ENCODE measurements at regions of chr16 and their contacts with region 1.

Region 1: DNA sequence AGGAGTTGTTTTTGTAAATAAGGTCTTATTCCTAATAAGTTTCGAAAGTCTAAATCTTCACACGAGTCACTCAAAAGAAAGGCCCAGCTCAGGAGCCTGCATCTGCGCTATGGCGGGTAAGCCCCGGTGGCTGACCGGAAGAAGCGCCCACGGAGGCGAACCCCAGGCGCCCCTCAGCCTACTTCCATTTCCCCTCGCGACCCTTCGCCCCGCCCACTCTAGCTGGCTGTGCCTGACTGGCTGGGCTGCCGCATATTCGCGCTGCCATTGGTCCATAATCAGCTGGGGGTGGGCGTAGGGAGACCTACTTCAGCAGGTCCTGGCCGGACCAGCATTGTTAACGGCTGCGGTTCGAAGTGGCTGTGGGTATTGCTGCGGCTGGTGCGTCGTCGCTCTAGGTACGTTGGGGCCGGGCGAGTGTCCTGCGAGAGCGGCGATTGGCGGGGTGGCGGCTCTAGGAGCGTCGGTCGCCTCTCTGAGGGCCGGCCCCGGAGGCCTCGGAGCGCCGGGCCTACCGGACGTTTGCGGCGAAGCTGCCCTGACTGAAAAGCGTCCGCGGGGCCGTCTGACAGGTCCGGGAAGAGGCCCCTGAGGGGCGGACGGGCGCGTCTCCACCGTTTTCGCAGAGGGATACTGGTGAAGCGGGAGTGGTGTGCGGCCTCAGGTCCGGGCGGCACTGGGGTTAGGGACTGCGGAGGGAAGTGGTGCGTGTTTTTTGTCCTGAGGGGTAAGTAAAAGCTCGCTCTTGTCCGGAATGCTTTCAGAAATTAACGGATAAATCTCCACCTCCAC is at the start of gene ATF7IP2:
- DNase-seq: peak; percentile 93
- ATAC-seq: peak; percentile 99
- H3K4me3 ChIP-seq: peak within 1 kb of the TSS; percentile 72 to 97 (median 93)
- H3K4me3 Mint-ChIP-seq: peak within 1 kb of the TSS; percentile 100
- H3K27ac ChIP-seq: peak within 1 kb of the TSS; percentile 72 to 86
- H3K27ac Mint-ChIP-seq: peak within 1 kb of the TSS; percentile 99
- H3K4me1 ChIP-seq: peaks cover 11 to 20% of the 10 kb centered on the region in 2 donors
- H3K4me1 Mint-ChIP-seq: peaks cover 45% of the 10 kb centered on the region
- H3K27me3 ChIP-seq: no peaks in the 10 kb centered on the region
- H3K27me3 Mint-ChIP-seq: no peaks in the 10 kb centered on the region
- CTCF ChIP-seq: no peak
- total RNA-seq, gene ATF7IP2: 63.7 and 67.5 TPM in 2 replicates

Region 2: GRCh38 chr16:10256784-10257641 is 128.9 kb before region 1 on chr16:
- CTCF ChIA-PET with region 1: interaction called, 5 read pairs
- POLR2A ChIA-PET with region 1: no interaction called
- intact Hi-C with region 1: loop called (anchors 5 kb)
- DNase-seq: peak; percentile 83
- ATAC-seq: peak; percentile 90
- H3K4me3 ChIP-seq: peak overlapping the region in 1 of 5 experiments; percentile 18
- H3K4me3 Mint-ChIP-seq: peak overlapping the region; percentile 42
- H3K27ac ChIP-seq: peak overlapping the region in 1 of 2 donors; percentile 56
- H3K27ac Mint-ChIP-seq: peak overlapping the region; percentile 70
- H3K4me1 ChIP-seq: peaks cover 31 to 49% of the 10 kb centered on the region in 2 donors
- H3K4me1 Mint-ChIP-seq: peaks cover 45% of the 10 kb centered on the region
- H3K27me3 ChIP-seq: no peaks in the 10 kb centered on the region
- H3K27me3 Mint-ChIP-seq: no peaks in the 10 kb centered on the region
- CTCF ChIP-seq: peak; percentile 87

Region 3: DNA sequence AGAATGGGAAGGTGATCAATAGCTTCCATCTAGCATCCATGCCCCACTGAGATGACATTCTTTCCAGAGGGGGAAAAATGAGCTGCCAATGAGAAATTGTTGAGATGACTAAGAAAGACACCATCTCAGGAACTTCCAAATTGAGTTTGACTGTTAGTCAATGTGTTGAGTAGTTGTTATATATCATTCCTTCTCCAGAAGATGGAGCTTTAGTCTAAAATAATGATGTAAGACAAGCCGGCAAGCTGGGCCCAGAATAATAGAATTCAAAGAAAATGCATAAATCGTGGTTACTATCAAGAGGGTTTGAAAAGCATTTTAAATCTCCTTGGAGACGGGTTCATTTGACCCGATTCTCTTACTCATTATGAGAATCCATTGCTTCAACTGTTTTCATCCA is 71.1 kb before region 1 on chr16:
- CTCF ChIA-PET with region 1: interaction called, 11 read pairs
- POLR2A ChIA-PET with region 1: interaction called, 4 read pairs
- intact Hi-C with region 1: loop called (anchors 10 kb)
- DNase-seq: peak; percentile 47
- ATAC-seq: peak; percentile 46
- H3K4me3 ChIP-seq: no peak overlapping the region
- H3K4me3 Mint-ChIP-seq: peak overlapping the region; percentile 23
- H3K27ac ChIP-seq: no peak overlapping the region
- H3K27ac Mint-ChIP-seq: peak overlapping the region; percentile 73
- H3K4me1 ChIP-seq: peaks cover 18 to 32% of the 10 kb centered on the region in 2 donors
- H3K4me1 Mint-ChIP-seq: peaks cover 28% of the 10 kb centered on the region
- H3K27me3 ChIP-seq: no peaks in the 10 kb centered on the region
- H3K27me3 Mint-ChIP-seq: no peaks in the 10 kb centered on the region
- CTCF ChIP-seq: peak; percentile 33

Region 4: DNA sequence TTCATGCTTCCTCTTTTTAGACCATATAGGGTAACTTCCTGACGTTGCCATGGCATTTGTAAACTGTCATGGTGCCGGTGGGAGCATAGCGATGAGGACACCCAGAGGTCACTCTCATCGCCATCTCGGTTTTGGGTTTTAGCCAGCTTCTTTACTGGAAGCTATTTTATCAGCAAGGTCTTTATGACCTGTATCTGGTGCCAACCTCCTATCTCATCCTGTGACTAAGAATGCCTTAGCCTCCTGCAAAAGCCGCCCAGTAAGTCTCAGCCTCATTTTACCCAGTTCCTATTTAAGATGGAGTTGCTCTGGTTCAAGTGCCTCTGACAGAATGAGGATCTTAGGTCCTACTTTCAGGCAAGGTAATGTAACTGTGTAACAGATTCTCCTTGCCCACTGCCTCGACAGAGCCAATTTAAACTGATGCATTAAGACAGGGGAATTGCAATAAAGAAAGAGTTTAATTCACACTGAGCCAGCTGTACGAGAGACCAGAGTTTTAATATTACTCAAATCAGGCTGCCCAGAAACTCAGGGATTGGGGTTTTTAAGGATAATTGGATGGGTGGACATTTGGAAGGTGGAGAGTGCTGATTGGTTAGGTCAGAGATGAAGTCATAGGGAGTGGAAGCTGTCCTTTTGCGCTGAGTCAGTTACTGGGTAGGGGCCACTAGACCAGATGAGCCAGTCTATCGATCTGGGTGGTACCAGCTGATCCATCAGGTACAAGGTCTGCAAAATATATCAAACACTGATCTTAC is 60.0 kb before region 1 on chr16:
- CTCF ChIA-PET with region 1: no interaction called
- POLR2A ChIA-PET with region 1: no interaction called
- intact Hi-C with region 1: loop called (anchors 10 kb)
- DNase-seq: no peak
- ATAC-seq: no peak
- H3K4me3 ChIP-seq: no peak overlapping the region
- H3K4me3 Mint-ChIP-seq: no peak overlapping the region
- H3K27ac ChIP-seq: no peak overlapping the region
- H3K27ac Mint-ChIP-seq: peak overlapping the region; percentile 39
- H3K4me1 ChIP-seq: peaks cover 14 to 21% of the 10 kb centered on the region in 2 donors
- H3K4me1 Mint-ChIP-seq: peaks cover 31% of the 10 kb centered on the region
- H3K27me3 ChIP-seq: no peaks in the 10 kb centered on the region
- H3K27me3 Mint-ChIP-seq: no peaks in the 10 kb centered on the region
- CTCF ChIP-seq: no peak

Region 5: GRCh38 chr16:10362077-10362863 is 23.7 kb before region 1 on chr16:
- CTCF ChIA-PET with region 1: interaction called, 6 read pairs
- POLR2A ChIA-PET with region 1: interaction called, 6 read pairs
- intact Hi-C with region 1: loop called (anchors 2 kb)
- DNase-seq: peak; percentile 64
- ATAC-seq: peak; percentile 76
- H3K4me3 ChIP-seq: peak overlapping the region in 3 of 5 experiments; percentile 3 to 32 (median 16)
- H3K4me3 Mint-ChIP-seq: peak overlapping the region; percentile 54
- H3K27ac ChIP-seq: peak overlapping the region in 1 of 2 donors; percentile 4
- H3K27ac Mint-ChIP-seq: peak overlapping the region; percentile 84
- H3K4me1 ChIP-seq: peaks cover 14 to 15% of the 10 kb centered on the region in 2 donors
- H3K4me1 Mint-ChIP-seq: peaks cover 11% of the 10 kb centered on the region
- H3K27me3 ChIP-seq: no peaks in the 10 kb centered on the region
- H3K27me3 Mint-ChIP-seq: no peaks in the 10 kb centered on the region
- CTCF ChIP-seq: no peak

Region 6: GRCh38 chr16:10373556-10373955 is 12.4 kb before region 1 on chr16:
- CTCF ChIA-PET with region 1: no interaction called
- POLR2A ChIA-PET with region 1: no interaction called
- intact Hi-C with region 1: no loop called
- DNase-seq: no peak
- ATAC-seq: no peak
- H3K4me3 ChIP-seq: no peak overlapping the region
- H3K4me3 Mint-ChIP-seq: no peak overlapping the region
- H3K27ac ChIP-seq: no peak overlapping the region
- H3K27ac Mint-ChIP-seq: no peak overlapping the region
- H3K4me1 ChIP-seq: no peaks in the 10 kb centered on the region
- H3K4me1 Mint-ChIP-seq: no peaks in the 10 kb centered on the region
- H3K27me3 ChIP-seq: no peaks in the 10 kb centered on the region
- H3K27me3 Mint-ChIP-seq: no peaks in the 10 kb centered on the region
- CTCF ChIP-seq: no peak

Region 7: GRCh38 chr16:10652730-10653590 is 267.0 kb after region 1 on chr16:
- CTCF ChIA-PET with region 1: no interaction called
- POLR2A ChIA-PET with region 1: no interaction called
- intact Hi-C with region 1: no loop called
- DNase-seq: no peak
- ATAC-seq: no peak
- H3K4me3 ChIP-seq: no peak overlapping the region
- H3K4me3 Mint-ChIP-seq: no peak overlapping the region
- H3K27ac ChIP-seq: no peak overlapping the region
- H3K27ac Mint-ChIP-seq: no peak overlapping the region
- H3K4me1 ChIP-seq: peaks cover 0 to 5% of the 10 kb centered on the region in 2 donors
- H3K4me1 Mint-ChIP-seq: peaks cover 2% of the 10 kb centered on the region
- H3K27me3 ChIP-seq: no peaks in the 10 kb centered on the region
- H3K27me3 Mint-ChIP-seq: peaks cover 3% of the 10 kb centered on the region
- CTCF ChIP-seq: no peak